Mammary epithelial cell (primary cell): ENCODE measurements at regions of chr17 and their contacts with region 1.

Region 1: DNA sequence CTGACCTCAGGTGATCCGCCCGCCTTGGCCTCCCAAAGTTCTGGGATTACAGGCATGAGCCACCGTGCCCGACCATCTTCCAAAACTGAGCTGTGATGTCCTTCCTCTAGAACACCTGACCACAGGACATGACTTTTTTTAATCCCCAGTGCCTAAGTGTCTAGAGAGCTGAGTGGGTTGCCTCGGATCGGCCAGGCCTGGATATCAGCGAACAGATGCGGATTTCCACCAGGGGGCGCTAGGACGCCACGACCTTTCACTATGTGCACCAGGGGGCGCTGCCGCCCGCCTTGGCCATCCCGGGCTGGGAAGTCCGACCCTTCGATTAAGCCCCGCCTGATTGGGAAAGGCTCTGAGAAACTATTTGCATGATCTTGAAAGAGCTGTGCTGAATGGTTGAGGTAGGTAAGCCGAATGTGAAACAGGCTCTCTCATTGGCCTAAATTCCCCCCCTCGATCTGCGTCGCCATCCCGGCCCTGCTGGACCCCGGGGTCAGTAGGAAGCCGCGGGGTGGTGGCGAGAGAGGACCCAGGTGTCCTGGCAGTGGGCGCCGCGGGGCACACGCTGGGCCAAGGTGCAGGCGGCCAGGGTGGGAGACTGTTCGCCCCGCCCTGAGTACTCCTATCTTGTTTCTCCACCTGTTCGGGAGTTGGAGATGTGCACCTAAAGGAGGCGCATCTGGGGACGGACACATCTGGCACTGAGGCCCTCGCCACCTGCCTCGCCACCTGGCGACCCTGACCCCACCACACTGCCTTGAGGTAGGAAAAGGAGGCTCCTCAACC is at the start of gene ACBD4:
- DNase-seq: peak; percentile 93
- H3K4me3 ChIP-seq: peak within 1 kb of the TSS; percentile 68 to 80 (median 71)
- H3K27ac ChIP-seq: peak within 1 kb of the TSS; percentile 26
- H3K4me1 ChIP-seq: peaks cover 30% of the 10 kb centered on the region
- H3K27me3 ChIP-seq: no peaks in the 10 kb centered on the region
- CTCF ChIP-seq: peak; percentile 100
- total RNA-seq, gene ACBD4: 6.5 to 8.1 TPM

Region 2: DNA sequence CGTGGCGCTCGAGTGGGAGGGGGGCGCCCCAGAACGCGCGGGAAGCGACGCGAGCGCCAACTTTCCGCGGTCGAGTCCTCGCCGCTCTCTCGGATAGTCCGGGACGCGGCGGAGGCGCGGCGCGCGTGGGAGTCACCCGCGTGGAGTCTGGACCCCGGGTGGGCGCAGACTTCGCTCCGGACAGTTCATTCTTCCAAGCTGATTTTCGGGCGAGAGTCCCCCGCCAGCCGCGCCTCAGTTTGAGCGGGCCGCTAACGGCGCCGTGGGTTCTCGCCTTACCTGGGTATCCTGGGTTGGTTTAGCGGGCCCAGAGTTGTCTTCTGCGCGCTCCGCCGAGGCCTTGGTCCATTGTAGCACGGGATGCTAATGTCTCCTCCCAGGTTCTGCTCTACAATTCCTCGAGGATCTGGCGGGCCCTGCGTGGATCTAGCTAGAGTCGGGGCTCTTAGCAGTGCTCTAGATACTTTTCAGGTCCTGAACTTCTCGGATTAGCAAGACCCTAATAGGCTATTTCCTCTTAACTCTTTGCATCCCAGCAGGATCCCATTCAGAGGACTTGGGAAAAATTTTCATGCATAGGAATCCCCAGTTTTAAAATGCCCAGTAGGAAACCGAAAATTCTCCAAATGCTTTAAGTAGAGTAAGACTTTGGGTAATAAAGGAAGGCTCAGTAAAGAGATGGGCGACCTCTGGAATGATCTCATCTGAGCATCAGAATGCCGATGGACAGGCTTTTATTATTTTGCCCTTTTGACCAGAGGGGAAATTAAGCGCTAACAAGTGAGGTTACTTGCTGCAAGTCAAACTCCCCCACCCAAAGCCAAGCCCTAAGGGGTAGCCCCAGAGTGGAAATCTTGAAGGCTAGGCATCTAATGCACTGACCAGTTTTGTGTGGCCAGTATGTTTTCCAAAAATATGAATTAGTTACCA is 304.8 kb before region 1 on chr17:
- CTCF ChIA-PET with region 1: no interaction called
- dilution Hi-C with region 1: no loop called
- in situ Hi-C with region 1: no loop called
- intact Hi-C with region 1: no loop called
- DNase-seq: no peak
- H3K4me3 ChIP-seq: peak overlapping the region; percentile 71 to 98 (median 80)
- H3K27ac ChIP-seq: peak overlapping the region; percentile 35
- H3K4me1 ChIP-seq: peaks cover 9% of the 10 kb centered on the region
- H3K27me3 ChIP-seq: no peaks in the 10 kb centered on the region
- CTCF ChIP-seq: no peak

Region 3: GRCh38 chr17:44899069-44899782 is 236.2 kb before region 1 on chr17 and contains the start of gene EFTUD2:
- CTCF ChIA-PET with region 1: no interaction called
- dilution Hi-C with region 1: no loop called
- in situ Hi-C with region 1: no loop called
- intact Hi-C with region 1: loop called (anchors 1 kb)
- DNase-seq: peak; percentile 86
- H3K4me3 ChIP-seq: peak within 1 kb of the TSS; percentile 69 to 89 (median 88)
- H3K27ac ChIP-seq: peak within 1 kb of the TSS; percentile 97
- H3K4me1 ChIP-seq: peaks cover 29% of the 10 kb centered on the region
- H3K27me3 ChIP-seq: no peaks in the 10 kb centered on the region
- CTCF ChIP-seq: no peak
- total RNA-seq, gene EFTUD2: 85.4 to 106 TPM

Region 4: GRCh38 chr17:45051060-45051719 is 84.2 kb before region 1 on chr17 and contains the start of gene DCAKD:
- CTCF ChIA-PET with region 1: interaction called, 3 read pairs
- dilution Hi-C with region 1: no loop called
- in situ Hi-C with region 1: no loop called
- intact Hi-C with region 1: loop called (anchors 5 kb)
- DNase-seq: peak; percentile 97
- H3K4me3 ChIP-seq: peak within 1 kb of the TSS; percentile 51 to 58 (median 55)
- H3K27ac ChIP-seq: peak within 1 kb of the TSS; percentile 94
- H3K4me1 ChIP-seq: peaks cover 23% of the 10 kb centered on the region
- H3K27me3 ChIP-seq: no peaks in the 10 kb centered on the region
- CTCF ChIP-seq: no peak
- total RNA-seq, gene DCAKD: 35.4 to 68.0 TPM

Region 5: GRCh38 chr17:45087504-45087975 is 47.8 kb before region 1 on chr17:
- CTCF ChIA-PET with region 1: no interaction called
- dilution Hi-C with region 1: no loop called
- in situ Hi-C with region 1: no loop called
- intact Hi-C with region 1: no loop called
- DNase-seq: no peak
- H3K4me3 ChIP-seq: no peak overlapping the region
- H3K27ac ChIP-seq: no peak overlapping the region
- H3K4me1 ChIP-seq: peaks cover under 1% of the 10 kb centered on the region
- H3K27me3 ChIP-seq: no peaks in the 10 kb centered on the region
- CTCF ChIP-seq: no peak

Region 6: DNA sequence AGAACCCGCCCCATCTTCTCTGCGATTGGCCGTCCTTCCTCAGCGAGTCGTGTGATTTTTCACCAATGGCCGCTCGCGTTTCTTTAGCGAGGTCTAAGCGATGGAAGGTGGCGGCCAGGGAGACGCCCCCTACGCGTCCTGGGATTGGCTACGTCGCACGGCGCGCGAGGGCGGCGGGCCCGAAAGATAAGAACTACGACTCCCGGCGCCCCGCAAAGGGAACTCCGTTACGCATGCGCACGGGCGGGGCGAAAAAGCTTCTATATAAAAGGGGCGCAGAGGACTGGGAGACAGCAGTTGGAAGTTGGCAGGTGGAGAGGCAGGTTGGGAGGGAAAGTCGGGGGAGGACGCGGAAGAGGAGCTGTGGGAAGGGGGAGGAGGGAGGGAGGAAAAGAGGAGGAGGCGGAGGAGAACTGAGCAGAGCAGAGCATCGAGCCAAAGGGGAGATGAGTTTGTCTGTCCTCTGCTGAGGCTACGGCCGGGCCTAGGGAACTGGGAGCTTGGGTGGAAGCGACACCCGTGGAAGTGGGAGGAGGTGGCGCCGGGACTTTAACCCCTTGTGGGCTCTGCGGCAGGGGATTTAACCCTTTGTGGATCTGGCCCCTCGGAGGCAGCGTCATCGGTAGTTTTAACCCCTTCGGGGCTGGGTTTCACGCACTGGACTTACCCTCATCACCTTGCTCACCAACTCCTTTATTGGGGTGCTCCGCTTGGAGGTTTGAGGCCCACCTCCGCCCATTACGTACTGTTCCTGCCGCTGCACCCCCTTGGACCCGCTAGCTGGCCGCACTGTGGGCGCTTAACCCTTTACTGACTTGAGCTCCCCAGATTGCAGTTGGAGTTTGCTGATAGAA is 13.0 kb after region 1 on chr17 and contains the start of gene HEXIM1:
- CTCF ChIA-PET with region 1: interaction called, 73 read pairs
- dilution Hi-C with region 1: no loop called
- in situ Hi-C with region 1: no loop called
- intact Hi-C with region 1: loop called (anchors 1 kb)
- DNase-seq: peak; percentile 100
- H3K4me3 ChIP-seq: peak within 1 kb of the TSS; percentile 72 to 98 (median 98)
- H3K27ac ChIP-seq: peak within 1 kb of the TSS; percentile 99
- H3K4me1 ChIP-seq: peaks cover 34% of the 10 kb centered on the region
- H3K27me3 ChIP-seq: no peaks in the 10 kb centered on the region
- CTCF ChIP-seq: no peak
- total RNA-seq, gene HEXIM1: 20.5 to 35.2 TPM

Region 7: GRCh38 chr17:45197555-45198334 is 62.4 kb after region 1 on chr17:
- CTCF ChIA-PET with region 1: interaction called, 39 read pairs
- dilution Hi-C with region 1: no loop called
- in situ Hi-C with region 1: loop called in 1 of 2 experiments (anchors 10 kb)
- intact Hi-C with region 1: loop called (anchors 1 kb)
- DNase-seq: peak; percentile 78
- H3K4me3 ChIP-seq: peak overlapping the region in 1 of 3 experiments; percentile 20
- H3K27ac ChIP-seq: no peak overlapping the region
- H3K4me1 ChIP-seq: peaks cover 16% of the 10 kb centered on the region
- H3K27me3 ChIP-seq: no peaks in the 10 kb centered on the region
- CTCF ChIP-seq: peak; percentile 93 to 99

Region 8: DNA sequence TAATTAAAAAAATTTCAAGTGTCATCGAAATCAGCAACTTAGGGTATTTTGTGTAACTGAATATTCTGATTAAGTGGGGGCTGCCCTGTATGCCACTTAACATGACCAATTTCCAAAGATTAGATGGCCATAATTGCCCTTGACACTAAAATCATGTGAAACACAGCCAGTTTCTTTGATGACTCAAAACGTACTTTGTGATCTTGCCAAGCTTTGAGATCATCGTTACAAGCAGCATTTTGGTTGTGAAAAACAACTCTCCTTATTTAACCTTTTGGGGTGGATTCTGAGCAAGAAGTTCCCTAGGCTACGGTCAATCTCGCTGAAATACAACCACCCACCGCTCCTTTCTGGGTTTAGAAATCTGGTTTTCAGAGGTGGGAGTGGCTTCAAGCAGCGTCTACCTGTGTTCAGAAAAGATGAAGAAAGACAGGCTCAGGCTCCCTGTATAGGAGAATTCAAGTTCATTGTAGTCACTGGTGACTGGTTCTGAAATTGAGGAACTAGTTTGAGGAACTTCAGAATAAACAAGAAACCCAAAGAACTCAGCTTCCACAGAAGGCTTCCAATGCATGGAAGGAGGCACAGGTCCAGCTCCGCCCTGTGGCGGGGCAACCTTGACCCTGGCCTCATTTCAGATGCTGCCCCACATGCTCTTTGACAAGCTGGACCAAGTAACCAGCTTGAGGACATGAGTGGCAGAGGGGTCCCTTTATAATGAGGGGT is 172.1 kb after region 1 on chr17:
- CTCF ChIA-PET with region 1: no interaction called
- dilution Hi-C with region 1: no loop called
- in situ Hi-C with region 1: no loop called
- intact Hi-C with region 1: loop called (anchors 5 kb)
- DNase-seq: peak; percentile 78
- H3K4me3 ChIP-seq: no peak overlapping the region
- H3K27ac ChIP-seq: peak overlapping the region; percentile 63
- H3K4me1 ChIP-seq: peaks cover 37% of the 10 kb centered on the region
- H3K27me3 ChIP-seq: no peaks in the 10 kb centered on the region
- CTCF ChIP-seq: no peak